ENCODE measurements at regions of chr10 and their contacts with region 1.

Region 1: DNA sequence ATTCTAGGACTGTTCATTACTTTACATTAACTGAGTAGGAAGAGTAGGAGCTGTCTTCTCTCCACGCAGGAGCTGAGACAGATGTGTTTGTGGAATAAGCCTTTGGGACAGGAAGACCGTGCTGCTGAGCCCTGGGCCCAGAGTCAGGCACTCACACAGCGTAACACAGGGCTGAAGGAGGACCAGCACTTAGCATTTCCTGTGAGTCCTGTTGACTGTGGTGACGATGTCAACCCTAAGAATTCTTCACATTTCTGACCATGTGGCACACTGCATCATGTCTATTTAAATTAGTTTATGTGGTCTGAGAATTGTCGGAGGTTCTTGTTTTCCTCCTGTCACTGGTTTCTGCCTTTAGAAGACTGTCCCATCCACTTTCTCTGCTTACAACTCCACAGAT is 117.2 kb downstream of the PIP4K2A start:
- DNase-seq: peak; percentile 61 to 79
- ATAC-seq: peak; percentile 89 to 98 (median 97)
- H3K4me3 ChIP-seq: no peak overlapping the region
- H3K4me3 Mint-ChIP-seq: peak overlapping the region; percentile 85
- H3K27ac ChIP-seq: peak overlapping the region; percentile 79
- H3K27ac Mint-ChIP-seq: peak overlapping the region; percentile 99
- H3K4me1 ChIP-seq: peaks cover 76% of the 10 kb centered on the region
- H3K4me1 Mint-ChIP-seq: peaks cover 82 to 84% of the 10 kb centered on the region in 2 donors
- H3K27me3 ChIP-seq: no peaks in the 10 kb centered on the region
- H3K27me3 Mint-ChIP-seq: no peaks in the 10 kb centered on the region
- CTCF ChIP-seq: no peak

Region 2: GRCh38 chr10:22527520-22527919 is 69.6 kb before region 1 on chr10:
- intact Hi-C with region 1: no loop called
- DNase-seq: no peak
- ATAC-seq: no peak
- H3K4me3 ChIP-seq: no peak overlapping the region
- H3K4me3 Mint-ChIP-seq: no peak overlapping the region
- H3K27ac ChIP-seq: no peak overlapping the region
- H3K27ac Mint-ChIP-seq: no peak overlapping the region
- H3K4me1 ChIP-seq: peaks cover 3% of the 10 kb centered on the region
- H3K4me1 Mint-ChIP-seq: peaks cover 6 to 15% of the 10 kb centered on the region in 2 donors
- H3K27me3 ChIP-seq: no peaks in the 10 kb centered on the region
- H3K27me3 Mint-ChIP-seq: no peaks in the 10 kb centered on the region
- CTCF ChIP-seq: no peak

Region 3: DNA sequence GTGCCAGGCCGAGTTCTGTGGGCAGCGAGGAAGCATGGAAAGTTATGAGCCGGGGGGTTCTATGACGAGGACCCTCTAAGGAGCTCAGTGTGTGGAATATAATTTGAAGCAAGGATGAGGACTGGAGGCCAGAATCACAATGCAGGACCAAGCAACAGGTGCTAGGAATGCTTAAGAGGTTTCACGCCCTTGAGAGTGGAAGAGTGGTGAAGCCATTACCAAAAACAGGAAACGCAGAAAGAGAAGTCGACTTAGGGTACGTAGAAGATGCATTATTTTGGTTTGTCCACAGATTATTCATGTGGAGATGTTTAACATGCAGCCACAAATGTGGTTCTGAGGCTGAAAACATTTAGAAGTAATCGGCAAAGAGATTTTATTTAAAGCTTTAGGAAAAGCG is 38.5 kb after region 1 on chr10:
- intact Hi-C with region 1: loop called (anchors 2 kb)
- DNase-seq: no peak
- ATAC-seq: no peak
- H3K4me3 ChIP-seq: no peak overlapping the region
- H3K4me3 Mint-ChIP-seq: peak overlapping the region; percentile 90
- H3K27ac ChIP-seq: peak overlapping the region; percentile 97
- H3K27ac Mint-ChIP-seq: peak overlapping the region; percentile 99
- H3K4me1 ChIP-seq: peaks cover 72% of the 10 kb centered on the region
- H3K4me1 Mint-ChIP-seq: peaks cover 90 to 93% of the 10 kb centered on the region in 2 donors
- H3K27me3 ChIP-seq: no peaks in the 10 kb centered on the region
- H3K27me3 Mint-ChIP-seq: no peaks in the 10 kb centered on the region
- CTCF ChIP-seq: no peak

Region 4: GRCh38 chr10:22666287-22667092 is 69.4 kb after region 1 on chr10:
- intact Hi-C with region 1: loop called (anchors 5 kb)
- DNase-seq: peak in 1 of 2 donors; percentile 91
- ATAC-seq: peak; percentile 78 to 89 (median 89)
- H3K4me3 ChIP-seq: peak overlapping the region; percentile 2
- H3K4me3 Mint-ChIP-seq: peak overlapping the region; percentile 87
- H3K27ac ChIP-seq: peak overlapping the region; percentile 38
- H3K27ac Mint-ChIP-seq: peak overlapping the region; percentile 81 to 99
- H3K4me1 ChIP-seq: peaks cover 35% of the 10 kb centered on the region
- H3K4me1 Mint-ChIP-seq: peaks cover 69 to 83% of the 10 kb centered on the region in 2 donors
- H3K27me3 ChIP-seq: no peaks in the 10 kb centered on the region
- H3K27me3 Mint-ChIP-seq: no peaks in the 10 kb centered on the region
- CTCF ChIP-seq: no peak